Endothelial cell of umbilical vein (primary cell): ENCODE measurements at regions of chr11 and their contacts with region 1.

Region 1: DNA sequence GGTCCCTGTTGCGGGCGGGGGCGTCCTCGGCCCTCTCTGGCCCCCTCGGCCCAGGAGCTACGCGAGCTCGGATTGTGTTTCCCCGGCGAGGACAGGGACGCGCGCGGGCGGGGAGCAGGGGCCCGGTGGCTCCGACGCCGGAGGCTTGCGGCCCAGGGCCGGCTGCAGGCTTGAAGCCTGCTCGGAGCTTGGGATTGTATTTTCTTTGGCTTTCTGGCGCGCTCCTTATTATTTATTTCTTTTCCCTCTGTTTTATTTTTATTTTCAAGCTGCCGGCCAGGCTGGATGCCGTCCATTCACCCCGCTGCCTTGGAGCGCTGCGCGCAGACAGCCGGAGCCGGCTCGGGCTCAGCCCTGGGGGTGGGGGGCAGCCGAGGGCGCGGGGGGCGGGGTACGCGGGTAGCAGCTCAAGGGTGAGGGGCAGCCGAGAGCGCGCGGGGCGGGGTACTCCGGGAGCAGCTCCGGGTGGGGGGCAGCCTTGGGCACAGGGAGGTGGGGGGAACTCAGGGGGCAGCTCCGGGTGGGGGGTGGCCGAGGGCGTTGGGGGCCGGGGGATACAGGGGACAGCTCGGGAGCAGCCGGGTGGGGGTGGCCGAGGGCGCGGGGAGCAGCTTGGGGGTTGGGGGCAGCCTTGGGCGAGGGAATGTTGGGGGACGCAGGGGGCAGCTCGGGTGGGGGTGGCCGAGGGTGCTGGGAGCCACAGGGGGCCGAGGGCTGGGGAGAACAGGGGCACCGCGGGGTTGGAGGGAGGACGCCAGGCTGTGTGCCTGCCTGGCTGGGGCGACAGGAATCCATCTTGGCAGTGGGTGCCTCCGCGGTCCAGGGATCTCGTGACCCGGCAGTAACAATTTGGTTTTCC is 42.7 kb downstream of the KCNJ1 start:
- DNase-seq: no peak
- H3K4me3 ChIP-seq: no peak overlapping the region
- H3K27ac ChIP-seq: no peak overlapping the region
- H3K4me1 ChIP-seq: peaks cover 36% of the 10 kb centered on the region
- H3K27me3 ChIP-seq: no peaks in the 10 kb centered on the region
- CTCF ChIP-seq: no peak
- POLR2A ChIP-seq: no peak

Region 2: GRCh38 chr11:128506999-128507611 is 317.3 kb before region 1 on chr11:
- CTCF ChIA-PET with region 1: no interaction called
- POLR2A ChIA-PET with region 1: no interaction called
- dilution Hi-C with region 1: no loop called
- intact Hi-C with region 1: loop called (anchors 5 kb)
- DNase-seq: peak; percentile 88
- H3K4me3 ChIP-seq: peak overlapping the region in 1 of 3 experiments; percentile 12
- H3K27ac ChIP-seq: peak overlapping the region; percentile 89
- H3K4me1 ChIP-seq: peaks cover 66% of the 10 kb centered on the region
- H3K27me3 ChIP-seq: no peaks in the 10 kb centered on the region
- CTCF ChIP-seq: no peak
- POLR2A ChIP-seq: peak; percentile 57